Activated CD4-positive, alpha-beta T cell treated with anti-CD3 and anti-CD28 coated beads for 36 hours (primary cell): ENCODE measurements at regions of chr16 and their contacts with region 1.

Region 1: DNA sequence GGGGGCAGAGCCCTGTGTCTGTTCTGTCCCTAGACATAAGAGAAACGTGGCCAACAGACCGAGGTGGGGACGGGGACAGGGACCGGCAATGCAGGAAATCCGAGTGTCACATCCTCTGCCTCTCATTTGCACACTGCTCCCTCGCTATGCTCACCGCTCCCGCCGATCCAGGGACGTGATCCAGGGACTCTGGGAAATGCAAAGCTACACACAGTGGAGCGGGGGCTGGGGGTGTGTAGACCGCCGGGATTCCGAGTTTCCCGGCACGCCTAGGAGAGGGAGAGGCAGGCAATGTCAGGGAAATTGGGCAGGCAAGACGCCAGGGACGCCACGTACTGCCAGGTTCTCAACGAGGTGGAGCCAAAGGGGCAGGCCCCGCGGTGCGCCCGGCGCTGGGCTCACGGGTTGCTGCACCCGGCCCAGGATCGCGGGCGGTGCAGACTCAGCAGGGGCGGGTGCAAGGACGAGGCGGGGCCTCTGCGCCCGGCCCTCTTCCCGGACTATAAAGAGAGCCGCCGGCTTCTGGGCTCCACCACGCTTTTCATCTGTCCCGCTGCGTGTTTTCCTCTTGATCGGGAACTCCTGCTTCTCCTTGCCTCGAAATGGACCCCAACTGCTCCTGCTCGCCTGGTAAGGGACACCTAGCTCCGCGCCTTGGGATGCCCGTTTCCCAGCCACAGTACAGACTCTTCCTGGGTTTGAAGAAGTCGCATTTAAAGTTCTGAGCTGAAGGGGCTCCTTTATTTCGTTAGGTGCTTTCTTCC is at the start of gene MT1X:
- DNase-seq: peak; percentile 96
- ATAC-seq: peak; percentile 96
- H3K4me3 Mint-ChIP-seq: peak within 1 kb of the TSS; percentile 89
- H3K27ac Mint-ChIP-seq: peak within 1 kb of the TSS; percentile 97
- H3K4me1 Mint-ChIP-seq: peaks cover 22% of the 10 kb centered on the region
- H3K27me3 Mint-ChIP-seq: no peaks in the 10 kb centered on the region
- total RNA-seq, gene MT1X: 46.8 to 59.3 TPM

Region 2: GRCh38 chr16:56356276-56357240 is 325.6 kb before region 1 on chr16:
- CTCF ChIA-PET with region 1: no interaction called
- POLR2A ChIA-PET with region 1: no interaction called
- intact Hi-C with region 1: loop called in 1 of 2 experiments (anchors 5 kb)
- DNase-seq: peak; percentile 77
- ATAC-seq: peak; percentile 84
- H3K4me3 Mint-ChIP-seq: peak overlapping the region; percentile 78
- H3K27ac Mint-ChIP-seq: peak overlapping the region; percentile 98
- H3K4me1 Mint-ChIP-seq: peaks cover 29% of the 10 kb centered on the region
- H3K27me3 Mint-ChIP-seq: no peaks in the 10 kb centered on the region

Region 3: DNA sequence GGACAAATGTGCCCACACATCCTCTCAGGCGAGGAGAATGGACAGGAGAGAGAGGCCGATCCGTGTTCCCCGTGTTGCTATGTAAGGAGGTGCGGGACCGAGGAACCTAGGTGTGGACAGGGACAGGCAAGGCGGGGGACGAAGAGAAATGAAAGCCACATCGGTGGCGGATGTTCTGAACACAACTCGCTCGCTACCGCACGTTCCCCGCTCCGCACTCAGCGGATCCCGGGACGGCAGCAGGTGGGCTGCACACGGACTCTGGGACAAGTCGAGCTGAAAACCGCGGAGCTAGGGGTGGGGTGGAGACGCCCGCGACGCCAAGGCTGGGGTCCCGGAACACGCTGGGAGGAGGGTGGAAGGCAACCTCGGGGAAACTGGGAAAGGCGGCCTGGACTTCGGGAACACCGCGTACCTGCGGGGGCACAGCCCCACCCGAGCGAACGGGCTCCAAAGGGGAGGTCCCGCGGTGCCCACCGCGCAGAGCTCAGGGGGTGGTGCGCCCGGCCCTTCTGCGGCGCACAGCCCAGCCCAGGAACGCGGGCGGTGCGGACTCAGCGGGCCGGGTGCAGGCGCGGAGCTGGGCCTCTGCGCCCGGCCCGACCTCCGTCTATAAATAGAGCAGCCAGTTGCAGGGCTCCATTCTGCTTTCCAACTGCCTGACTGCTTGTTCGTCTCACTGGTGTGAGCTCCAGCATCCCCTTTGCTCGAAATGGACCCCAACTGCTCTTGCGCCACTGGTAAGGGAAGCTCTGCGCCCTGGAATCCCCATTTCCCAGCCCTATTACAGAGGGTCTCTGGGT is 56.8 kb before region 1 on chr16 and contains the start of gene MT1E:
- CTCF ChIA-PET with region 1: no interaction called
- POLR2A ChIA-PET with region 1: interaction called, 10 read pairs
- intact Hi-C with region 1: loop called in 1 of 2 experiments (anchors 1 kb)
- DNase-seq: peak; percentile 82
- ATAC-seq: peak; percentile 88
- H3K4me3 Mint-ChIP-seq: peak within 1 kb of the TSS; percentile 71
- H3K27ac Mint-ChIP-seq: peak within 1 kb of the TSS; percentile 79
- H3K4me1 Mint-ChIP-seq: peaks cover 14% of the 10 kb centered on the region
- H3K27me3 Mint-ChIP-seq: peaks cover 26% of the 10 kb centered on the region
- total RNA-seq, gene MT1E: 61.1 to 108 TPM

Region 4: DNA sequence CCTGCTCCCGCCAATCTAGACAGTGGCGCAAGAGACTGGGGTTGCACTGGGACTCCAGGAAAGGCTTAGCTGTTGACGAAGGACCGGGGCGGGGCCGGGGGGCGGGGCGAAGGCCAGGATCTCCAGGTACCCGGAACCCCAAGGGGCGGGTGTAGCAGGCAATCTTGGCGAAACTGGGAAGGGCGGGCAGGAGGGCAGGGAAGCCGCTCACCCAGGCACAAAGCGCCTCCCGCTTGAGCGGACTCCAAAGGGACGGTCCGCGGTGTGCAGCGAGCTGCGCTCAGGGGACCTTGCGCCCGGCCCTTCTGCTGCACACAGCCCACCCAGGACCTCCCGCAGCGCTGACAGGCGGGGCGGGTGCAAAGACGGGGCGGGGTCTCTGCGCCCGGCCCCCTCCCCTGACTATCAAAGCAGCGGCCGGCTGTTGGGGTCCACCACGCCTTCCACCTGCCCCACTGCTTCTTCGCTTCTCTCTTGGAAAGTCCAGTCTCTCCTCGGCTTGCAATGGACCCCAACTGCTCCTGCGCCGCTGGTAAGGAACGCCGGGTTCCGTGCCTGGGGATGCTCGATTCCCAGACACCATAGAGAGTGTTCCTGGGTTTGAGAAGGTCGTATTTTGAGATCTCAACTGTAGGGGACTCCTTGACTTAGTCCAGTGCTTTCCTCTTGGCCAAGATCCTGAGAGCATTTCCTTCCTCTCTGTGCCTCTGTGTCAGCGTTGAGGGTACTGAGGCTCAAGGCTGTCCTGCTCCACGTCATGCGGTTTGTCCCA is 24.4 kb before region 1 on chr16 and contains the start of gene MT1F:
- CTCF ChIA-PET with region 1: interaction called, 7 read pairs
- POLR2A ChIA-PET with region 1: interaction called, 3 read pairs
- intact Hi-C with region 1: loop called (anchors 1 kb)
- DNase-seq: peak; percentile 84
- ATAC-seq: peak; percentile 85
- H3K4me3 Mint-ChIP-seq: peak within 1 kb of the TSS; percentile 79
- H3K27ac Mint-ChIP-seq: peak within 1 kb of the TSS; percentile 76
- H3K4me1 Mint-ChIP-seq: peaks cover 16% of the 10 kb centered on the region
- H3K27me3 Mint-ChIP-seq: peaks cover 2% of the 10 kb centered on the region
- total RNA-seq, gene MT1F: 7.0 to 7.1 TPM

Region 5: DNA sequence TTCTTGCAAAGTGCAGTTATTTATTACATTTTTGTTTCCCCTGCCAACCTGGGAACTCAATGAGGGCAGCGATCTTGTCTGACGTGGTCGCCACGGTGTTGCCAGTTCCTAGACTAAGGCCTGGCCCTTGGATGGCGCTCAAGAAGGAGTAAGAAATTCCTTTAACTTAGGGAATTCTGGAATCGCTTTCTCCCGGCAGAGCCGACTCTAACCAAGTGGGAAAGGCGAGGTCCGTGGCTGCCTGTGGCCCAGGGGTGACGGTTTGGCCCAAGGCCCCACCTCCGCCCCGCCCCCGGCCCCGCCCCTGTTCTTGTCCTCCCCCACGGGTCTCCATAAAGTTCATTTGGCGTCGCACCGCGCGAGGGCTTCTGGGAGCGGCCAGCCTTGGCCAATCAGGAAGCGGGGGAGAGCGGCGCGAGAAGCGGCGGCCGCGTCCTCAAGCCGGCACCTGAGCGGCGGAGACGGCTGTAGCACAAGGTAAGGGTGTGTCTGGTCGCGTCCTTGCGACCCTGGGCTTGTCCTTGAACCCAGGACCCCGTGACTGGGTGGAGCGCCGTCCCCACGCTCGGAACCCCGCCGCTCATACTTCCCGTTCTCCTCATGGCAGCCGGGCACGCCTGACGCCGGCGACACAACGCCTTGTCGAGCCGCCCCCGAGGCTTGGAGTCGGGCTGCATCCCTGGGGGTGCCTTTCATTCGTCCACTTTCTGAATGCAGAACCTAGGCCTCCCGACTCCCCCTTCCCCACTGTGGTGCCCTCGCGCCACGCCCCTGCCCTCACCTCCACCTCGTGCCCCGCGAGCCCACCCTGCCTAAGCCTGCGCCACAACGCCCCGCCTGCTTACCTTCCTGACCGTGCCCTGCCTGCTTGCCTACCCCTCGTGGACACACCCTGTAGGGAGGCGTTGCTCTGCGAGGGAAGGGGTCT is 47.9 kb after region 1 on chr16 and contains the start of gene NUP93:
- CTCF ChIA-PET with region 1: no interaction called
- POLR2A ChIA-PET with region 1: no interaction called
- intact Hi-C with region 1: loop called in 1 of 2 experiments (anchors 1 kb)
- DNase-seq: peak; percentile 95
- ATAC-seq: peak; percentile 83
- H3K4me3 Mint-ChIP-seq: no peak within 1 kb of the TSS
- H3K27ac Mint-ChIP-seq: peak within 1 kb of the TSS; percentile 85
- H3K4me1 Mint-ChIP-seq: peaks cover 14% of the 10 kb centered on the region
- H3K27me3 Mint-ChIP-seq: no peaks in the 10 kb centered on the region
- total RNA-seq, gene NUP93: 131 to 154 TPM